Activated B cell treated with CpG ODN at 0.5 μM for 24 hours (primary cell): ENCODE measurements at regions of chr14 and their contacts with region 1.

Region 1: GRCh38 chr14:61609191-61609843 is 86.0 kb upstream of the HIF1A start:
- DNase-seq: no peak
- ATAC-seq: no peak
- H3K4me3 Mint-ChIP-seq: no peak overlapping the region
- H3K27ac Mint-ChIP-seq: no peak overlapping the region
- H3K4me1 Mint-ChIP-seq: peaks cover 10% of the 10 kb centered on the region
- H3K27me3 Mint-ChIP-seq: no peaks in the 10 kb centered on the region
- CTCF ChIP-seq: no peak

Region 2: GRCh38 chr14:61578745-61579144 is 30.6 kb before region 1 on chr14:
- CTCF ChIA-PET with region 1: no interaction called
- POLR2A ChIA-PET with region 1: no interaction called
- intact Hi-C with region 1: loop called (anchors 5 kb)
- DNase-seq: no peak
- ATAC-seq: no peak
- H3K4me3 Mint-ChIP-seq: no peak overlapping the region
- H3K27ac Mint-ChIP-seq: no peak overlapping the region
- H3K4me1 Mint-ChIP-seq: peaks cover 4% of the 10 kb centered on the region
- H3K27me3 Mint-ChIP-seq: no peaks in the 10 kb centered on the region
- CTCF ChIP-seq: no peak

Region 3: GRCh38 chr14:61644834-61645233 is 35.5 kb after region 1 on chr14:
- CTCF ChIA-PET with region 1: no interaction called
- POLR2A ChIA-PET with region 1: no interaction called
- intact Hi-C with region 1: loop called (anchors 5 kb)
- DNase-seq: no peak
- ATAC-seq: peak; percentile 79
- H3K4me3 Mint-ChIP-seq: no peak overlapping the region
- H3K27ac Mint-ChIP-seq: no peak overlapping the region
- H3K4me1 Mint-ChIP-seq: peaks cover 29% of the 10 kb centered on the region
- H3K27me3 Mint-ChIP-seq: no peaks in the 10 kb centered on the region
- CTCF ChIP-seq: no peak